Dendritic cell treated with granulocyte-macrophage colony-stimulating factor and Interleukin-4, amounts not matched to agents 40 ng/mL and 50 ng/mL, for 4 days (primary cell): ENCODE measurements at regions of chr1 and their contacts with region 1.

Region 1: GRCh38 chr1:92817986-92818764 is 13.7 kb upstream of the RPL5 start:
- H3K4me3 Mint-ChIP-seq: no peak overlapping the region
- H3K27ac Mint-ChIP-seq: no peak overlapping the region
- H3K4me1 Mint-ChIP-seq: peaks cover 21% of the 10 kb centered on the region
- H3K27me3 Mint-ChIP-seq: no peaks in the 10 kb centered on the region

Region 2: DNA sequence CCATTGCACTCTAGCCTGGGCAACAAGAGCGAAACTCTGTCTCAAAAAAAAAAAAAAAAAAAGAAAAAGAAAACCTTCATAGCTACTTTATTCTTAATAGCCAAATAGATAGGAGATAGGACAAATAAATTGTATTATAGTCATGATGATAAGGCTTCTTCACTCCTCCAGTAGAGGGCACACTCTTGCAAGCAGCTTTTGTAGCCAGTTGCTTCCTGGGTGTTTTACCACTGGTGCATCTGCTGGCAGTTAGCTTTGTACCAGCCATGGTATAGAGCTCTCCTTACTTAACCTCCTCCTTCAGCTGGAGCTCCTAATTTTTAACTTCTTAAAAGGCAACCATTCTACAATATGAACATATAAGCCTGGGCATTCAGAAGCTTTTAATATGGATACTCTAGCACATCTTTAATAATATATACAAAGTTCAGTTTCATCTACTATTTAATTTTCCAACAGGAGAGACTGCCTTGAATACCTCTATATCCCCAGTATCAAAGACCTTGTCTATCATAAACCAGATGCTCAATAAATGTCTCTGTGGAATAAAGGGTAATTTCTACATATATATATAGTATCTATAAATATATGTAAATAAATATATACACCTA is 69.0 kb before region 1 on chr1:
- intact Hi-C with region 1: loop called (anchors 1 kb)
- H3K4me3 Mint-ChIP-seq: no peak overlapping the region
- H3K27ac Mint-ChIP-seq: no peak overlapping the region
- H3K4me1 Mint-ChIP-seq: peaks cover 26% of the 10 kb centered on the region
- H3K27me3 Mint-ChIP-seq: no peaks in the 10 kb centered on the region